ENCODE measurements at regions of chrX and their contacts with region 1.

Region 1: GRCh38 chrX:30889147-30890140 is at the start of gene TAB3:
- DNase-seq: peak; percentile 95
- ATAC-seq: peak; percentile 88
- H3K4me3 Mint-ChIP-seq: peak within 1 kb of the TSS; percentile 78
- H3K27ac Mint-ChIP-seq: peak within 1 kb of the TSS; percentile 95
- H3K4me1 Mint-ChIP-seq: peaks cover 39% of the 10 kb centered on the region
- H3K27me3 Mint-ChIP-seq: no peaks in the 10 kb centered on the region
- total RNA-seq, gene TAB3: 18.7 to 20.1 TPM

Region 2: DNA sequence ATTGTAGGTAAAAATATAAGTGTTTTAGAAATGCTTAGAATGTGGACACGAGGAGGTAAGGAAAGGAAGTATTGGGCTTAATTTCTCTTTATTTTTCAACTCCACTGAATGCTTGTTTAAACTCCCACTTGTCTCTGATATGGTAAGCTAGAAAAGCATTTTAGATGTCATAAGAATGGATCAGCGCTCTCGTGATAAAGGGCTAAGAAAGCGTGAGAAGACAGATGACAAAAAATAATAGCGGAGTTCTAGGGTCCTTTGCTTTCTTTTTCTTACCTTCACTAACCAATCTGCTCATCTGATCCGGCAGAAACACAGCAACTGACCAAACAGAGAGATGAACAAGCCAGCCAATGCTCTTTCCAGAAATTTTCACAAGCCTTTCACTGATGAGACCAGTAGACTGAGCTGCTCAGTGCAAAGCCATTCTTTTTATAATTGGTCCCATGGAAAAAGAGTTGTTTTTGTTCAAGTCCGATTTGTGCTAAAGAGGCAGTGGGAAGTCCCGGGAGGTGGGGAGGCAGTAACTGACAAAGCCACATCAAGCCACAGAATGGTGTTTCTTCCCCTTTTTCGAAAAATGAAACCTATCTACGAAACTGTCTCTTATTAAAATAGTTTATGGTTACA is 312.0 kb before region 1 on chrX and contains the start of gene TASL:
- CTCF ChIA-PET with region 1: no interaction called
- POLR2A ChIA-PET with region 1: no interaction called
- intact Hi-C with region 1: loop called in 1 of 2 experiments (anchors 5 kb)
- DNase-seq: peak; percentile 39
- ATAC-seq: peak; percentile 89
- H3K4me3 Mint-ChIP-seq: peak within 1 kb of the TSS; percentile 80
- H3K27ac Mint-ChIP-seq: peak within 1 kb of the TSS; percentile 83
- H3K4me1 Mint-ChIP-seq: peaks cover 15% of the 10 kb centered on the region
- H3K27me3 Mint-ChIP-seq: no peaks in the 10 kb centered on the region
- total RNA-seq, gene TASL: 1.7 to 2.2 TPM

Region 3: GRCh38 chrX:30652527-30653414 is 236.7 kb before region 1 on chrX:
- CTCF ChIA-PET with region 1: no interaction called
- POLR2A ChIA-PET with region 1: interaction called, 7 read pairs
- intact Hi-C with region 1: loop called (anchors 1 to 2 kb)
- DNase-seq: peak; percentile 95
- ATAC-seq: peak; percentile 67
- H3K4me3 Mint-ChIP-seq: peak overlapping the region; percentile 86
- H3K27ac Mint-ChIP-seq: peak overlapping the region; percentile 98
- H3K4me1 Mint-ChIP-seq: peaks cover 36% of the 10 kb centered on the region
- H3K27me3 Mint-ChIP-seq: no peaks in the 10 kb centered on the region

Region 4: GRCh38 chrX:30781711-30782444 is 107.6 kb before region 1 on chrX:
- CTCF ChIA-PET with region 1: no interaction called
- POLR2A ChIA-PET with region 1: interaction called, 10 read pairs
- intact Hi-C with region 1: no loop called
- DNase-seq: no peak
- ATAC-seq: peak; percentile 81
- H3K4me3 Mint-ChIP-seq: no peak overlapping the region
- H3K27ac Mint-ChIP-seq: peak overlapping the region; percentile 37
- H3K4me1 Mint-ChIP-seq: peaks cover 29% of the 10 kb centered on the region
- H3K27me3 Mint-ChIP-seq: peaks cover 13% of the 10 kb centered on the region

Region 5: DNA sequence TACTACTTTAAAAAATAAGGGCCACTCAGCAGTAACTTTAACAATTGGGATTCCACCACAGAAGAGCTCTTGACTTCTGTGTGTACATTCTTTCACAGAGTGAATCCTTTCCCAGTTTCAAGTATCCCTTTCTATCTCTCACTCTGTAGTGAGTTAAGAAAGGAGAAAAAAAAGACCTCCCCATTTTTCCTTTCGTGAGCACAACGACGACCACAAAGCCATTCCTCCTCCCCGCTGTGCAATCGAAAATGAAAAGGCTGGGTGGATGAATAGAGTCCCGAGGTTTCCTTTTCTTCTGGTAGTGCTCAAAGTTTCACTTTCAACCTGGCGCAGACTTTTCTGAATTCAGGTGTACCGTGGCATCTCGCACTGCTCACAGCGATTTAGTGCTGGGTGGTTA is 58.4 kb before region 1 on chrX:
- CTCF ChIA-PET with region 1: no interaction called
- POLR2A ChIA-PET with region 1: interaction called, 3 read pairs
- intact Hi-C with region 1: loop called (anchors 1 to 2 kb)
- DNase-seq: peak; percentile 55
- ATAC-seq: peak; percentile 91
- H3K4me3 Mint-ChIP-seq: peak overlapping the region; percentile 34
- H3K27ac Mint-ChIP-seq: no peak overlapping the region
- H3K4me1 Mint-ChIP-seq: peaks cover 37% of the 10 kb centered on the region
- H3K27me3 Mint-ChIP-seq: no peaks in the 10 kb centered on the region

Region 6: DNA sequence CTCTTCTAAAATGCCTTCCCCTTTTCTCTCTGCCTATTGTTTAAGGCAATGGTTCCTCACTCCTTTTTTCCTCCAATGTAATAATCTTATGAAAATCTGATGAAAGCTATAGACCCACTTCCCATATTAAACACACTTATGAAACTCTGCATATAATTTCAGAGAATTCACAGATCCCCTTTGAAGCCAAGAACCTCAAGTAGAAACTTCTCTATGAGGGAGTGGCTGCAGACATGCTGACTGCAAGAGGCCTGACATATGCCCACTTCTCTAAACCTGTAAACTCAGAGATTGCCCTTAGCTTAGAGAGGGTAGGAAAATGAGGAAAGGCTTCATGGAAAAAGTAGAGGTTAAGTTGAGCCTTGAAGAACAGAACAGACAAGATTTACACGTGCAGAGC is 38.0 kb before region 1 on chrX:
- CTCF ChIA-PET with region 1: no interaction called
- POLR2A ChIA-PET with region 1: no interaction called
- intact Hi-C with region 1: no loop called
- DNase-seq: no peak
- ATAC-seq: no peak
- H3K4me3 Mint-ChIP-seq: no peak overlapping the region
- H3K27ac Mint-ChIP-seq: no peak overlapping the region
- H3K4me1 Mint-ChIP-seq: no peaks in the 10 kb centered on the region
- H3K27me3 Mint-ChIP-seq: no peaks in the 10 kb centered on the region

Region 7: GRCh38 chrX:30900227-30900626 is 10.8 kb after region 1 on chrX:
- CTCF ChIA-PET with region 1: no interaction called
- POLR2A ChIA-PET with region 1: interaction called, 5 read pairs
- intact Hi-C with region 1: loop called (anchors 1 kb)
- DNase-seq: peak; percentile 15
- ATAC-seq: peak; percentile 64
- H3K4me3 Mint-ChIP-seq: no peak overlapping the region
- H3K27ac Mint-ChIP-seq: no peak overlapping the region
- H3K4me1 Mint-ChIP-seq: peaks cover 3% of the 10 kb centered on the region
- H3K27me3 Mint-ChIP-seq: peaks cover 3% of the 10 kb centered on the region

Region 8: GRCh38 chrX:31228415-31228832 is 339.0 kb after region 1 on chrX:
- CTCF ChIA-PET with region 1: no interaction called
- POLR2A ChIA-PET with region 1: no interaction called
- intact Hi-C with region 1: no loop called
- DNase-seq: no peak
- ATAC-seq: no peak
- H3K4me3 Mint-ChIP-seq: no peak overlapping the region
- H3K27ac Mint-ChIP-seq: no peak overlapping the region
- H3K4me1 Mint-ChIP-seq: no peaks in the 10 kb centered on the region
- H3K27me3 Mint-ChIP-seq: no peaks in the 10 kb centered on the region

Measured in activated CD4-positive, alpha-beta T cell treated with anti-CD3 and anti-CD28 coated beads for 36 hours (primary cell).